Activated CD4-positive, alpha-beta T cell treated with anti-CD3 and anti-CD28 coated beads, Interleukin-2, amount 10 ng/mL, durations not matched to agents 24 days and 14 days (primary cell): ENCODE measurements at regions of chr14 and their contacts with region 1.

Region 1: DNA sequence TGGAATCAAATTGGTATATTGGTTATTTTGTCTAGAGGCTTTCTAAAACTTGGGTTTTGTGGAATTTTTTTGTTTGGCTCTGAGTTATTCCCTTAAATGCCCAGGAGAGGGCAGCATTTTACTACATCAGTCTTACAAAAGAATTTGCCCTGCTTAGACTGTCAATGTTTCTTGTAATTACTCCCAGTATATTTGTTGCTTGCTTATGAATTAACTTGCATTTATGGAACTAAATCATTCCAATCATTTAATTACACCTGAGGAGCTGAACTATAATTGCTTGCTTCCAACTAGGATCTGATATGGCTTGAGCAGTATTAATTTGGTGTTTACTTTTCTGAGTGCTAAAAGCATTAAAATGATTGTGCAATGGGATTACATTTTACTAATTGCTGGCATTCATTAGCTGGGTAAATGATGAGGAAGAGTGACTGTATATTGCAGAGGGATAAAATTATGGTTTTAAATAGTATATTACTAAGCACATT is 48.7 kb downstream of the MIPOL1 start:
- DNase-seq: no peak
- H3K4me3 Mint-ChIP-seq: no peak overlapping the region
- H3K27ac Mint-ChIP-seq: no peak overlapping the region
- H3K4me1 Mint-ChIP-seq: no peaks in the 10 kb centered on the region
- H3K27me3 Mint-ChIP-seq: no peaks in the 10 kb centered on the region

Region 2: DNA sequence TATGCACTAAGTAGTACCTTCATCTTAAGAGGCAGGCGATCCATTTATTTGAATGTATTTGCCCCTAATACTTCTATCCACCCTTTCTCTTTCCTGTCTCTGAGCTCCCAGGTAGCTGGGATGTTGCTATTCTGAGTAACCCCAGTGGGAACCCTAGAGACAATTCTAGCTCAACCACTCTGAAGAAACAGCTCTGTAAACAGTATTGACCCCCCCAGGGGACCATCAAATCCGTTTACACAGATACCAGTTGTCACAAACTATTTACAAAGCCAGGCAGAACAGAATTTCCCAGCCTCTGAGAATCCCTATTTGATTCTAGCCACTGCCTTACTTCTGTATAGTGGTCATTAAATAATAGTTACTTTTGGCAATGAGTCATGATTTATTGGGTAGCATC is 16.2 kb after region 1 on chr14:
- intact Hi-C with region 1: no loop called
- DNase-seq: no peak
- H3K4me3 Mint-ChIP-seq: no peak overlapping the region
- H3K27ac Mint-ChIP-seq: no peak overlapping the region
- H3K4me1 Mint-ChIP-seq: no peaks in the 10 kb centered on the region
- H3K27me3 Mint-ChIP-seq: no peaks in the 10 kb centered on the region

Region 3: GRCh38 chr14:37874429-37875191 is 628.1 kb after region 1 on chr14:
- intact Hi-C with region 1: loop called (anchors 1 kb)
- DNase-seq: peak; percentile 95
- H3K4me3 Mint-ChIP-seq: no peak overlapping the region
- H3K27ac Mint-ChIP-seq: no peak overlapping the region
- H3K4me1 Mint-ChIP-seq: peaks cover 7% of the 10 kb centered on the region
- H3K27me3 Mint-ChIP-seq: no peaks in the 10 kb centered on the region